CD8-positive, alpha-beta T cell (primary cell): ENCODE measurements at regions of chr5 and their contacts with region 1.

Region 1: DNA sequence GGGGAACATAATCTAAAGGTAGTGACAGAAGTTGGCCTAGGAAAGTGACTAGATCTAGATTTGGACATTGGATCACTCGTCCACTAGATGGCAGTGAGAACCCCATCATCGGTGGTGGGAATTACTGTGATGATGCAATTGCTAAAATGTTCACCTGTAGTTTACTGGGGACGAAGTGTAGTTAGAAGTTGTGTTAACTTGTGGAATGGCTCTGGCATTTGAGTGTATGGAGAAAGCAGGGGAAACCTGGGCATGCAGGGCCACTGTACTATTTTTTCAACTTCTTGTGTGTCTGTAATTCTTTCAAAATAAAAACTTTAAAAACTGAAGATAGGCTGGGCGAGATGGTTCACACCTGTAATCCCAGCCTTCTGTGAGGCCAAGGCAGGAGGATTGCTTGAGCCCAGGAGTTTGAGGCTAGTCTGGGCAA is 75.5 kb downstream of the PHAX start:
- DNase-seq: peak; percentile 34 to 84 (median 62)
- ATAC-seq: peak; percentile 97
- H3K4me3 ChIP-seq: no peak overlapping the region
- H3K4me3 Mint-ChIP-seq: no peak overlapping the region
- H3K27ac ChIP-seq: no peak overlapping the region
- H3K27ac Mint-ChIP-seq: no peak overlapping the region
- H3K4me1 ChIP-seq: no peaks in the 10 kb centered on the region
- H3K4me1 Mint-ChIP-seq: peaks cover 3% of the 10 kb centered on the region
- H3K27me3 ChIP-seq: no peaks in the 10 kb centered on the region
- H3K27me3 Mint-ChIP-seq: no peaks in the 10 kb centered on the region
- CTCF ChIP-seq: peak; percentile 85

Region 2: DNA sequence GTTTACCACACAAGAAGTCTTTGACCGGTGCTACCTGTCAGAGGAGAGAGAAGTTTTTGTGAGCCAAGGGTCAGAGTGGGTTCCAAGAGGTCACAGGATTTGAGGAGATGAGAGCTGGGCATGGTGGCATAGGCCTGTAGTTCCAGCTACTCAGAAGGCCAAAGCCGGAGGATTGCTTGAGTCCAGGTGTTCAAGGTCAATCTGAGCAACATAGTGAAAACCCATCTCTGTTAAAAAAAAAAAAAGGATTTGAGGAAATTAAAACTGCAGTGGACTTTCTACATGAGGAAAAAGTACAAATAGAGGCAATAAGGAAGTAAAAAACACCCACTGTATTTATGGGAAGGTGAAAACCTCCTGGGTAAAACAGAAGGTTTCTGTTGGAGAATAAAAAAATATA is 11.6 kb before region 1 on chr5:
- CTCF ChIA-PET with region 1: interaction called, 13 read pairs
- POLR2A ChIA-PET with region 1: no interaction called
- intact Hi-C with region 1: no loop called
- DNase-seq: no peak
- ATAC-seq: no peak
- H3K4me3 ChIP-seq: no peak overlapping the region
- H3K4me3 Mint-ChIP-seq: no peak overlapping the region
- H3K27ac ChIP-seq: no peak overlapping the region
- H3K27ac Mint-ChIP-seq: no peak overlapping the region
- H3K4me1 ChIP-seq: no peaks in the 10 kb centered on the region
- H3K4me1 Mint-ChIP-seq: no peaks in the 10 kb centered on the region
- H3K27me3 ChIP-seq: no peaks in the 10 kb centered on the region
- H3K27me3 Mint-ChIP-seq: no peaks in the 10 kb centered on the region
- CTCF ChIP-seq: no peak

Region 3: DNA sequence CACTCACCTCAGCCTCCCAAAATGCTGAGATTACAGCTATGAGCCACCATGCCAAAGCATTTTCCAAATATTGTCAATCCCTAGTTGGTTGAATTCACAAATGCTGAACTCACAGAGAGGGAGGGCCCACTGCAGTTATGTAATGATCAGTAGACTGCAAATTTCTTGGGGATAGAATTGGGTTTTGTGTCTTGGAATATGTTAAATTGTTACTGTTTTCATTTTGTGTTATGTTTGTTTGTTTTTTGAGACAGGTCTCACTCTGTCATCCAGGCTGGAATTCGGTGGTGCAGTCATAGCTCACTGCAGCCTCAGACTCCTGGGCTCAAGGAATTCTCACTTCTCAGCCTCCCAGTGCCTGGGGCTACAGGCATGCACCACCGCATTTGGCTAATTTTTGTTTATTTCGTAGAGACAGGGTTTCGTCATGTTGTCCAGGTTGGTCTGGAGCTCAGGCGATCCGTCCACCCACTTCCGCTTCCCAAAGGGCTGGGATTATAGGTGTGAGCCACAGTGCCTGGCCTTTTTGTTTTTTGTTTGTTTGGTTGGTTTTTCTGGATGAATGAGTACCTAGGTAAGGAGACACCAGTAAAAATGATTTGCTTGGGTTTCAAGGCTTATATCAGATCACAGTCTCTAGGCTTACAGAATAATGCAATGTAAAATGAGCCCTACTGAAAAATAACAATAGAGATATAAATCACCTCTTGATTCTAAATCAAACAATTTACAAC is 69.2 kb after region 1 on chr5:
- CTCF ChIA-PET with region 1: interaction called, 3 read pairs
- POLR2A ChIA-PET with region 1: no interaction called
- intact Hi-C with region 1: loop called in 1 of 2 experiments (anchors 2 kb)
- DNase-seq: no peak
- ATAC-seq: no peak
- H3K4me3 ChIP-seq: no peak overlapping the region
- H3K4me3 Mint-ChIP-seq: no peak overlapping the region
- H3K27ac ChIP-seq: no peak overlapping the region
- H3K27ac Mint-ChIP-seq: no peak overlapping the region
- H3K4me1 ChIP-seq: peaks cover 11% of the 10 kb centered on the region
- H3K4me1 Mint-ChIP-seq: peaks cover 17% of the 10 kb centered on the region
- H3K27me3 ChIP-seq: no peaks in the 10 kb centered on the region
- H3K27me3 Mint-ChIP-seq: no peaks in the 10 kb centered on the region
- CTCF ChIP-seq: no peak

Region 4: GRCh38 chr5:126808521-126808988 is 132.3 kb after region 1 on chr5:
- CTCF ChIA-PET with region 1: interaction called, 27 read pairs
- POLR2A ChIA-PET with region 1: interaction called, 3 read pairs
- intact Hi-C with region 1: loop called (anchors 1 to 2 kb)
- DNase-seq: peak in 2 of 9 experiments; percentile 29 to 50
- ATAC-seq: no peak
- H3K4me3 ChIP-seq: no peak overlapping the region
- H3K4me3 Mint-ChIP-seq: no peak overlapping the region
- H3K27ac ChIP-seq: no peak overlapping the region
- H3K27ac Mint-ChIP-seq: no peak overlapping the region
- H3K4me1 ChIP-seq: no peaks in the 10 kb centered on the region
- H3K4me1 Mint-ChIP-seq: peaks cover 26% of the 10 kb centered on the region
- H3K27me3 ChIP-seq: no peaks in the 10 kb centered on the region
- H3K27me3 Mint-ChIP-seq: no peaks in the 10 kb centered on the region
- CTCF ChIP-seq: peak; percentile 64

Region 5: DNA sequence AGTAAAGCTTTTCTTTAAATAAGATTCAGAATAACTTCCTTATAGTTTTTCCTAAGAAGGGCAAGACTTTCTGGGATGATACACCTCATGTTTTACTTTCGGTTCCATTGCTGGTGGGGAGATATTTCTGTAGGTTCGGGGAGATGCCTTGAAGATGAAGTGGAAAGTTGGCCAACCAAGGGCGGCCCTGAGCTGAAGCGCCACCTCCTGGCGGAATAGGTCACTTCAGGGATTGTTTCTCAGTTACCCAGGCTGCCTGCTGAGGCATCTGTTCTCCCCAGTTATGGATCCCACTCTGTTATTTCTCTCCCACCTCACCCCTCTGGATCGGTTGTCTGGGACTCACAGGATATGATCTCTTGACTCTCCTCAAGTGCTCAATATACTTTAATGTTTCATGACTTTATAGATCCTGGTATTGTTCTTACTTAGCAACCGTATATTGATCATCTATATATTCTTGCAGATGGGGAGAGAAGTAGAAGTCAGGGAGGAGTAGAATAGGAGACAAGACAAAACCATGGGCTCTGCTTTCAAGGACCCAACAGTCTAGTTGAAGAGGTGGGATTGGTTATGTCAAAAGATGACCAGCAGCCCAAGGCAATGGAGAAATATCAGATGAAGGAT is 637.8 kb after region 1 on chr5:
- CTCF ChIA-PET with region 1: interaction called, 6 read pairs
- POLR2A ChIA-PET with region 1: no interaction called
- intact Hi-C with region 1: loop called in 1 of 2 experiments (anchors 5 kb)
- DNase-seq: peak; percentile 41 to 79 (median 62)
- ATAC-seq: peak; percentile 65
- H3K4me3 ChIP-seq: no peak overlapping the region
- H3K4me3 Mint-ChIP-seq: no peak overlapping the region
- H3K27ac ChIP-seq: no peak overlapping the region
- H3K27ac Mint-ChIP-seq: no peak overlapping the region
- H3K4me1 ChIP-seq: no peaks in the 10 kb centered on the region
- H3K4me1 Mint-ChIP-seq: no peaks in the 10 kb centered on the region
- H3K27me3 ChIP-seq: no peaks in the 10 kb centered on the region
- H3K27me3 Mint-ChIP-seq: no peaks in the 10 kb centered on the region
- CTCF ChIP-seq: peak; percentile 79